Aorta (tissue), 5 donors: ENCODE measurements at regions of chr3 and their contacts with region 1.

Region 1: DNA sequence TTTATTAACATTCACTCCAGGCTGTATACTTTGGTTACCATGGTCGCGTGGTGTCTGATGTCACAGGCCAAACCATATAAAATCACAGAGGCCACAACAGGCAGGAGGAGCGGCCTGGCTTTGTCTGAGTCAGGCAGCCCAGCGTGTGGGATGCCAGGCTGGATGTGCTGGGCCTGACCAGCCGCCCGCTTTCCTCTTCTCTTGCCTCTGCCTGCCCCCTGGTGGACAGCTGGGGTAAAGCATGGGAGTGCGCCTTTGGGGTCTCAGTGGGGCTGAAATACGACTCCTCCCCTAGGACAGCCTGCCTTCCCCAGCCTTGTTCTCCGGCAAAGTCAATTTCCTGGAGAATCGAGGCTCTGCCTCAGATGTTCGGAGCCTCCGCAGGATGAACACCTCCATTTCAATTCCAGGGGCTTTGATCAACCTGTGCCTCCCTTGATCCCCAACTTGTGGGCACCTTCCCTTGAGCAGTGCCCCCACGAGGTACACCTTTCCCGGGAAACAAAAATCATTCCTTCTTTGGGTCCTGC is 78.2 kb downstream of the CCNL1 start:
- DNase-seq: peak; percentile 94 to 98
- ATAC-seq: peak; percentile 94
- H3K4me3 ChIP-seq: no peak overlapping the region
- H3K27ac ChIP-seq: no peak overlapping the region
- H3K4me1 ChIP-seq: peaks cover 0 to under 1% of the 10 kb centered on the region in 2 donors
- H3K27me3 ChIP-seq: no peaks in the 10 kb centered on the region

Region 2: DNA sequence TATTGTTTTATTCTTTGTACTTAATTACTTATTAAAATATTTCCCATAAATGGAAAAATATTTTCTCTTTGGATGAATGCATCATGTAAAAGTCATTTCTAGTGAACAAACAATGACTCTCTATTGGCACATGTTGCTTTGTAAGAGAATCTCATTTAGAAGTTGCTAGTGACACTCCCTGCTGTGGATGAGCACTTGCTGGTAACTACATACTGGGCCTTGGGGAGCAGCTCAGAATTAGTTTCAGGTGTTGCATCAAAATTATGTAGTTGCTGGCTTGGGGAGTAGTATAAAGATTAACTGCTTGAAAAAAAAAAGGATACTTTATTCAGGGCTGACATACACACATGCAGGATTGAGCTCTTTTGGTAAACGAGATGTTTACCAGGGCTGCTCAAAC is 1041.7 kb before region 1 on chr3:
- intact Hi-C with region 1: loop called in 1 of 2 experiments (anchors 10 kb)
- DNase-seq: no peak
- ATAC-seq: no peak
- H3K4me3 ChIP-seq: no peak overlapping the region
- H3K27ac ChIP-seq: no peak overlapping the region
- H3K4me1 ChIP-seq: peaks cover 0 to 1% of the 10 kb centered on the region in 2 donors
- H3K27me3 ChIP-seq: no peaks in the 10 kb centered on the region

Region 3: GRCh38 chr3:156535162-156535627 is 546.6 kb before region 1 on chr3:
- intact Hi-C with region 1: loop called (anchors 5 kb)
- DNase-seq: peak; percentile 82 to 83
- ATAC-seq: peak; percentile 94
- H3K4me3 ChIP-seq: no peak overlapping the region
- H3K27ac ChIP-seq: no peak overlapping the region
- H3K4me1 ChIP-seq: no peaks in the 10 kb centered on the region
- H3K27me3 ChIP-seq: no peaks in the 10 kb centered on the region

Region 4: GRCh38 chr3:156674046-156674910 is 407.5 kb before region 1 on chr3 and contains the start of gene TIPARP:
- intact Hi-C with region 1: loop called (anchors 2 to 5 kb)
- DNase-seq: peak; percentile 100
- ATAC-seq: peak; percentile 99
- H3K4me3 ChIP-seq: peak within 1 kb of the TSS; percentile 88 to 90
- H3K27ac ChIP-seq: peak within 1 kb of the TSS; percentile 31 to 92
- H3K4me1 ChIP-seq: peaks cover 0 to 1% of the 10 kb centered on the region in 2 donors
- H3K27me3 ChIP-seq: no peaks in the 10 kb centered on the region
- total RNA-seq, gene TIPARP: 23.2 to 24.2 TPM

Region 5: GRCh38 chr3:156892701-156893100 is 189.0 kb before region 1 on chr3:
- intact Hi-C with region 1: loop called in 1 of 2 experiments (anchors 10 kb)
- DNase-seq: no peak
- ATAC-seq: no peak
- H3K4me3 ChIP-seq: no peak overlapping the region
- H3K27ac ChIP-seq: no peak overlapping the region
- H3K4me1 ChIP-seq: no peaks in the 10 kb centered on the region
- H3K27me3 ChIP-seq: no peaks in the 10 kb centered on the region